Activated CD4-positive, alpha-beta T cell treated with anti-CD3 and anti-CD28 coated beads, Interleukin-2, amount 10 ng/mL, durations not matched to agents 24 days and 14 days (primary cell): ENCODE measurements at regions of chr18 and their contacts with region 1.

Region 1: GRCh38 chr18:50933684-50934083 is 34.2 kb upstream of the ELAC1 start:
- DNase-seq: peak; percentile 34
- H3K4me3 Mint-ChIP-seq: no peak overlapping the region
- H3K27ac Mint-ChIP-seq: no peak overlapping the region
- H3K4me1 Mint-ChIP-seq: peaks cover 4% of the 10 kb centered on the region
- H3K27me3 Mint-ChIP-seq: no peaks in the 10 kb centered on the region

Region 2: DNA sequence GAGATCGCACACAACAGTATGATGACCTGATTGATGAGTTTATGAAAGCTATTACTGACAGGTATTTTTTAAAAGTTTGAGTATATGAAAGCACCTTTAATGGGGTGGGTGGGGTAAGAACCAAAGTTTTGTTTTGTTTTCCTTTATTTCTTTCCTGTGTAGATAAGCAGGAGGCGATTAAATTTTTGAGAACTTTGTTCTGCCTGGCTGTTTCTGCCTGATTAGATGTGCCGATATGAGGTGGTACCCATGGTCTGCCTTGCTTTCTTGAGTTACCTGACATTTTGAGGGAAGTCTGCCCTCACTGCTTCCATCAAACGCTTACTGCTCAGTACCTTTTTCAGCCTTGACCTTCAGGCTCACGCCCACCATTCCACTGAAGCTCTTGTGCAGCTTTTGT is 15.5 kb before region 1 on chr18:
- intact Hi-C with region 1: loop called (anchors 2 kb)
- DNase-seq: no peak
- H3K4me3 Mint-ChIP-seq: no peak overlapping the region
- H3K27ac Mint-ChIP-seq: no peak overlapping the region
- H3K4me1 Mint-ChIP-seq: peaks cover 6% of the 10 kb centered on the region
- H3K27me3 Mint-ChIP-seq: no peaks in the 10 kb centered on the region